ENCODE measurements at regions of chr5 and their contacts with region 1.

Region 1: GRCh38 chr5:65481635-65482295 is at the start of gene ADAMTS6:
- DNase-seq: peak; percentile 91
- H3K4me3 Mint-ChIP-seq: no peak within 1 kb of the TSS
- H3K27ac Mint-ChIP-seq: peak within 1 kb of the TSS; percentile 85
- H3K4me1 Mint-ChIP-seq: peaks cover 18% of the 10 kb centered on the region
- H3K27me3 Mint-ChIP-seq: peaks cover 6% of the 10 kb centered on the region
- total RNA-seq, gene ADAMTS6: 0.73 and 0.89 TPM in 2 replicates

Region 2: GRCh38 chr5:64634997-64635686 is 846.6 kb before region 1 on chr5:
- intact Hi-C with region 1: loop called (anchors 1 kb)
- DNase-seq: no peak
- H3K4me3 Mint-ChIP-seq: no peak overlapping the region
- H3K27ac Mint-ChIP-seq: no peak overlapping the region
- H3K4me1 Mint-ChIP-seq: peaks cover 5% of the 10 kb centered on the region
- H3K27me3 Mint-ChIP-seq: peaks cover 30% of the 10 kb centered on the region

Region 3: GRCh38 chr5:64811050-64811640 is 670.6 kb before region 1 on chr5:
- intact Hi-C with region 1: loop called (anchors 1 kb)
- DNase-seq: peak; percentile 73
- H3K4me3 Mint-ChIP-seq: no peak overlapping the region
- H3K27ac Mint-ChIP-seq: no peak overlapping the region
- H3K4me1 Mint-ChIP-seq: peaks cover 1% of the 10 kb centered on the region
- H3K27me3 Mint-ChIP-seq: no peaks in the 10 kb centered on the region

Region 4: GRCh38 chr5:65076251-65076869 is 405.4 kb before region 1 on chr5:
- intact Hi-C with region 1: loop called (anchors 1 kb)
- DNase-seq: peak; percentile 89
- H3K4me3 Mint-ChIP-seq: no peak overlapping the region
- H3K27ac Mint-ChIP-seq: no peak overlapping the region
- H3K4me1 Mint-ChIP-seq: peaks cover 12% of the 10 kb centered on the region
- H3K27me3 Mint-ChIP-seq: peaks cover 17% of the 10 kb centered on the region

Region 5: GRCh38 chr5:65190328-65191053 is 291.3 kb before region 1 on chr5:
- intact Hi-C with region 1: loop called (anchors 2 kb)
- DNase-seq: no peak
- H3K4me3 Mint-ChIP-seq: no peak overlapping the region
- H3K27ac Mint-ChIP-seq: peak overlapping the region; percentile 64
- H3K4me1 Mint-ChIP-seq: peaks cover 8% of the 10 kb centered on the region
- H3K27me3 Mint-ChIP-seq: no peaks in the 10 kb centered on the region

Region 6: DNA sequence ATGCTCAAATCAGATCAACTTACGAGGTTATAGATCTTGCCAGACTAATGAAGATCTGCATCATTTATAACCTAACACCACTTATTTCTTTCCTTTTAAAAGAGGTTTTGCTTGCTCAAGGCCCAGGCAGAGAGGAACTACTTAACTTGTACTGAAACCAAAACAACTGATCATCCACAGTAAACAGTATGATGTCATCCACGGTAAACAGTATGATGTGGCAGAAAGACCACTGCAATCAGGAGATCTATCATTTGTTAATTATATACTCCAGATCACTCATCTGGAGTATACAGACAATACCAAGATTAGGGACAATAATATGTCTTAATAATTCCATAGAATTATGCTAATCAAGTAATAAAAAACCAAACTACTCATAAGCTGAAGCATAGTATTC is 116.9 kb before region 1 on chr5:
- intact Hi-C with region 1: no loop called
- DNase-seq: no peak
- H3K4me3 Mint-ChIP-seq: no peak overlapping the region
- H3K27ac Mint-ChIP-seq: no peak overlapping the region
- H3K4me1 Mint-ChIP-seq: no peaks in the 10 kb centered on the region
- H3K27me3 Mint-ChIP-seq: peaks cover 2% of the 10 kb centered on the region

Region 7: DNA sequence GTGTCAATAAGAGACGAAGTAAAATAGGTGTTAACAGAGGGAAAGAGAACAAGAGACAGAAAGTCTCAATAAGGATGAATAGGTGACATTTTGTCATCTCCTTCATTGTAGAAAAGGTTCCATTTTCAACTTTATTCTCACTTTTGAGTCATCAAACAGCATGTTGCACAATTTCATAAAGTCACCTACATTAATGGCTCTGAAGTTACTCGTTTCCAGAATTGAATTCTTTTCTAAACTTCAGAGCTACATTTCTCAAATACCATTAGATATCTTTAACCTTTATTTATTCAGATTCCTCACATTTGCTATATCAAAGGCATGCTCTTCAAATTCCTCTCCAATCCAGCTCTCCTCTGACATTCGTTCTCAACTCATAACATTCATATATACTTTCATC is 13.1 kb before region 1 on chr5:
- intact Hi-C with region 1: no loop called
- DNase-seq: no peak
- H3K4me3 Mint-ChIP-seq: no peak overlapping the region
- H3K27ac Mint-ChIP-seq: no peak overlapping the region
- H3K4me1 Mint-ChIP-seq: no peaks in the 10 kb centered on the region
- H3K27me3 Mint-ChIP-seq: peaks cover 3% of the 10 kb centered on the region

Measured in activated CD4-positive, alpha-beta T cell treated with anti-CD3 and anti-CD28 coated beads, Interleukin-2, amount 10 ng/mL, durations not matched to agents 24 days and 14 days (primary cell).